ENCODE measurements at regions of chr19 and their contacts with region 1.

Region 1: DNA sequence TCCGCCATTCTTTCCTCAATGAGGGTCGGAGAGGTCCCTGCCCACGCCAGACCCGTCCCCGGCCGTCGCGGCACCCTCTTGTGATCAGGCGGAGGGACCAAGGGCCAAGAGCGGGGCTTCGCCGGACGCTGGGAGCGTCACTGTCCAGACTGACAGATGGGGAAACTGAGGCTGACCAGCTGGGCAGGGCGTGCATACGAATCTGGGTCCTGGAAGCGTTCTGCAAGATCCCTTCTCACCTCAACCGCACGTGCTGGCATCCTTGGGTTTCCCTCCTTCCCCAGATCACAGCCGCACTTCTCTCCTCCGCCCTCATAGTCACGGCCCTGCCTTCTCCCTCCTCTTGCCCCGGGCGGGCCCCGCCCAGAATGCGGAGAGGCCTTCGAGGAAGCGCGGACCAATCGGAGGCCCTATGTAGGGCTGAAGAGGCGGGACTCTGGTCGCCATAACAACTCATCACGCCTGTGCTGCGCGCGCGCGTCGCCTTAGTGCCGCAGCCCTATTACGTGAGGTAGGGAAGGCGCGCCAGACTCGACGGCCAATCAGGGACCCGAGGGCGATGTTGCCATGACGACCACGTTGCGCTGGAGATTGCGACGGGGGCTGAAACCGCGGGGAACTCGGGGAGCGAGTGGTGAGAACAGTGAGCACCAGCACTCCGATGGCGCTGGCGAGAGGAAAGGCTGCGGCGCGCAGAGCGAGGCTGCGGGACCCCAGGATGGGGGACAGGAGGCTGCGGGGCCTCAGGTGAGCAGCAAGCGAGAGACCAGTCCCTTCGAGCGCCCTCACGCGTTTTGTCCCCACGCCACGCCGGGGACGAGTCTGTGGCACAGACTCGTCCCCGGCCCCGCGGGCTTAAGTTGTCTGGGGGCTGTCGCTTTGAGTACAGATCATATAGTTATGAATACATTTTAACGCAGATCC is 5.7 kb downstream of the RNF225 start:
- DNase-seq: peak; percentile 96 to 100 (median 98)
- ATAC-seq: peak; percentile 97
- H3K4me3 ChIP-seq: peak overlapping the region; percentile 77
- H3K4me3 Mint-ChIP-seq: peak overlapping the region; percentile 86 to 98 (median 94)
- H3K27ac ChIP-seq: peak overlapping the region; percentile 91
- H3K27ac Mint-ChIP-seq: peak overlapping the region; percentile 88 to 97 (median 94)
- H3K4me1 ChIP-seq: peaks cover 6 to 13% of the 10 kb centered on the region in 2 donors
- H3K4me1 Mint-ChIP-seq: peaks cover 6 to 19% (median 8%) of the 10 kb centered on the region in 7 donors
- H3K27me3 ChIP-seq: peaks cover 0 to 3% of the 10 kb centered on the region in 2 donors
- H3K27me3 Mint-ChIP-seq: peaks cover 5 to 20% (median 7%) of the 10 kb centered on the region in 5 donors

Region 2: GRCh38 chr19:58154679-58155648 is 246.2 kb before region 1 on chr19:
- CTCF ChIA-PET with region 1: no interaction called
- POLR2A ChIA-PET with region 1: no interaction called
- intact Hi-C with region 1: no loop called
- DNase-seq: peak; percentile 92 to 100 (median 98)
- ATAC-seq: peak; percentile 98
- H3K4me3 ChIP-seq: peak overlapping the region; percentile 97
- H3K4me3 Mint-ChIP-seq: peak overlapping the region; percentile 72 to 90 (median 84)
- H3K27ac ChIP-seq: peak overlapping the region; percentile 99
- H3K27ac Mint-ChIP-seq: peak overlapping the region; percentile 52 to 80 (median 73)
- H3K4me1 ChIP-seq: peaks cover 8 to 13% of the 10 kb centered on the region in 2 donors
- H3K4me1 Mint-ChIP-seq: peaks cover 6 to 33% (median 19%) of the 10 kb centered on the region in 7 donors
- H3K27me3 ChIP-seq: no peaks in the 10 kb centered on the region
- H3K27me3 Mint-ChIP-seq: no peaks in the 10 kb centered on the region

Region 3: DNA sequence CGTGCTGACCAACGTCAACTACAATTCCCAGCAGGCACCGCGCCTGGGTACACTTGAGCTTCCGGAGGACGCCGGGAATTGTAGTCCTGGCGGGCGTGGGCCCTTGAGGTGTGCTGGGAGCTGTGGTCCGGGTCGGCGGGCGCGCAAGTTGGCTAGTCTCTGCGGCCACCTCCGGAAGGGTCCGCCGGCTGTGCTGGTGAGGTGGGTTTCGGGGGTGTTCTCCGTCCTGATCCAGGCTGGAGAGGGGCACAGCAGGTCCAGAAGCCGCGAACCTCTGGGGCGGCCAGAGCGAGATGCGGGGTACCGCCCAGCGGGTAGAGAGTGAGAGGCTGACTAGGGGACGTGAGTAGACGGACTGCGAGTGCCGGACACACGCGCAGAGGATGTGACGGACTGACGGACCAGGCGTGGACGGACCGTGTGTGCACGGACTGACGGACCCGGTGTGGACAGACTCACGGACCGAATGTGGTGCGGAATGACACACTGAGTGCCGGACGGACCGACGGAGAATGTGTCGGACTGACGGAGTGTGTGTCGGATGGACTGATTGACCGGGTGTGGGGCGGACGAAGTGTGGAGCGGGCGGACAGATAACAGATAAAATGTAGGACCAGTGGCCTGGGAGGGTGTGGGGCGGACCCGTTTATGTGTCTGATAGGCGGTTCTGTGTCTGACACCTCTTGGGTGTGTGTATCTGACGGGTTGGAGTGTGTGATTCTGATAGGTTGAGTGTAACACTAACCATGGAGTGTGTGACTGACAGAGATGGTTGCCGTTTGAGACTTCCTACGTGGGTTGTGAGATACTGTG is 74.1 kb before region 1 on chr19 and contains the start of gene ZSCAN22:
- CTCF ChIA-PET with region 1: no interaction called
- POLR2A ChIA-PET with region 1: no interaction called
- intact Hi-C with region 1: loop called in 1 of 2 experiments (anchors 1 kb)
- DNase-seq: peak; percentile 65 to 89 (median 78)
- ATAC-seq: peak; percentile 90
- H3K4me3 ChIP-seq: peak within 1 kb of the TSS; percentile 95
- H3K4me3 Mint-ChIP-seq: no peak within 1 kb of the TSS
- H3K27ac ChIP-seq: peak within 1 kb of the TSS; percentile 72
- H3K27ac Mint-ChIP-seq: no peak within 1 kb of the TSS
- H3K4me1 ChIP-seq: peaks cover 14 to 16% of the 10 kb centered on the region in 2 donors
- H3K4me1 Mint-ChIP-seq: peaks cover 0 to 10% (median 6%) of the 10 kb centered on the region in 7 donors
- H3K27me3 ChIP-seq: no peaks in the 10 kb centered on the region
- H3K27me3 Mint-ChIP-seq: no peaks in the 10 kb centered on the region
- total RNA-seq, gene ZSCAN22: 1.1 to 6.0 (median 4.5) TPM

Region 4: GRCh38 chr19:58386576-58387337 is 14.4 kb before region 1 on chr19 and contains the start of gene RPS5:
- CTCF ChIA-PET with region 1: no interaction called
- POLR2A ChIA-PET with region 1: interaction called, 16 read pairs
- intact Hi-C with region 1: loop called (anchors 1 kb)
- DNase-seq: peak; percentile 84 to 98 (median 96)
- ATAC-seq: peak; percentile 97
- H3K4me3 ChIP-seq: peak within 1 kb of the TSS; percentile 75
- H3K4me3 Mint-ChIP-seq: peak within 1 kb of the TSS; percentile 89 to 96 (median 94)
- H3K27ac ChIP-seq: peak within 1 kb of the TSS; percentile 94
- H3K27ac Mint-ChIP-seq: peak within 1 kb of the TSS; percentile 94 to 99 (median 97)
- H3K4me1 ChIP-seq: peaks cover 26% of the 10 kb centered on the region in 2 donors
- H3K4me1 Mint-ChIP-seq: peaks cover 22 to 59% (median 45%) of the 10 kb centered on the region in 7 donors
- H3K27me3 ChIP-seq: no peaks in the 10 kb centered on the region
- H3K27me3 Mint-ChIP-seq: peaks cover 0 to 3% (median 0%) of the 10 kb centered on the region in 5 donors
- total RNA-seq, gene RPS5: 911 to 1,684 (median 1,502) TPM

Region 5: DNA sequence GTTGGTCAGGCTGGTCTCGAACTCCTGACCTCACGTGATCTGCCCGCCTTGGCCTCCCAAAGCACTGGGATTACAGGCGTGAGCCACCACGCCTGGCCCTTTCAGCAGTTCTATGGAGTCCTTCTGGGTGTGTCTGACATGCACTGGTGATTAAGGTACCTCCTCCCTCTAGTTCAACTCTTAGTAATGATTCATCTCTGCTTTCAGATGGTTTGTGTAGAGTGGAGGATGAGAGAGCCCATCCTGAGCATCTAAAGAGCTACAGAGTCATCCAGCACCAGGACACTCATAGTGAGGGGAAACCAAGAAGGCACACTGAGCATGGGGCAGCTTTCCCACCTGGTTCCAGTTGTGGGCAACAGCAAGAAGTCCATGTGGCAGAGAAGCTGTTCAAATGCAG is 15.4 kb after region 1 on chr19:
- CTCF ChIA-PET with region 1: no interaction called
- POLR2A ChIA-PET with region 1: no interaction called
- intact Hi-C with region 1: no loop called
- DNase-seq: no peak
- ATAC-seq: no peak
- H3K4me3 ChIP-seq: no peak overlapping the region
- H3K4me3 Mint-ChIP-seq: no peak overlapping the region
- H3K27ac ChIP-seq: no peak overlapping the region
- H3K27ac Mint-ChIP-seq: no peak overlapping the region
- H3K4me1 ChIP-seq: no peaks in the 10 kb centered on the region
- H3K4me1 Mint-ChIP-seq: peaks cover 0 to 4% (median 0%) of the 10 kb centered on the region in 7 donors
- H3K27me3 ChIP-seq: no peaks in the 10 kb centered on the region
- H3K27me3 Mint-ChIP-seq: no peaks in the 10 kb centered on the region

Region 6: GRCh38 chr19:58475714-58476497 is 74.7 kb after region 1 on chr19 and contains the start of gene ZNF446:
- CTCF ChIA-PET with region 1: no interaction called
- POLR2A ChIA-PET with region 1: no interaction called
- intact Hi-C with region 1: loop called (anchors 1 kb)
- DNase-seq: peak; percentile 84 to 97 (median 96)
- ATAC-seq: peak; percentile 92
- H3K4me3 ChIP-seq: peak within 1 kb of the TSS; percentile 77
- H3K4me3 Mint-ChIP-seq: peak within 1 kb of the TSS; percentile 78 to 99 (median 96)
- H3K27ac ChIP-seq: peak within 1 kb of the TSS; percentile 91
- H3K27ac Mint-ChIP-seq: peak within 1 kb of the TSS; percentile 87 to 100 (median 99)
- H3K4me1 ChIP-seq: peaks cover 14 to 16% of the 10 kb centered on the region in 2 donors
- H3K4me1 Mint-ChIP-seq: peaks cover 6 to 29% (median 17%) of the 10 kb centered on the region in 7 donors
- H3K27me3 ChIP-seq: no peaks in the 10 kb centered on the region
- H3K27me3 Mint-ChIP-seq: no peaks in the 10 kb centered on the region
- total RNA-seq, gene ZNF446: 9.5 to 20.0 (median 15.1) TPM

Region 7: GRCh38 chr19:58513694-58514563 is 112.8 kb after region 1 on chr19:
- CTCF ChIA-PET with region 1: no interaction called
- POLR2A ChIA-PET with region 1: no interaction called
- intact Hi-C with region 1: loop called (anchors 1 to 5 kb)
- DNase-seq: peak; percentile 91 to 99 (median 95)
- ATAC-seq: peak; percentile 98
- H3K4me3 ChIP-seq: peak overlapping the region; percentile 39
- H3K4me3 Mint-ChIP-seq: peak overlapping the region; percentile 73 to 93 (median 84)
- H3K27ac ChIP-seq: peak overlapping the region; percentile 65
- H3K27ac Mint-ChIP-seq: peak overlapping the region; percentile 67 to 94 (median 85)
- H3K4me1 ChIP-seq: peaks cover 17 to 21% of the 10 kb centered on the region in 2 donors
- H3K4me1 Mint-ChIP-seq: peaks cover 17 to 40% (median 27%) of the 10 kb centered on the region in 7 donors
- H3K27me3 ChIP-seq: no peaks in the 10 kb centered on the region
- H3K27me3 Mint-ChIP-seq: no peaks in the 10 kb centered on the region

Region 8: GRCh38 chr19:58572818-58573657 is 171.9 kb after region 1 on chr19 and contains the start of gene MZF1:
- CTCF ChIA-PET with region 1: no interaction called
- POLR2A ChIA-PET with region 1: no interaction called
- intact Hi-C with region 1: loop called in 1 of 2 experiments (anchors 1 kb)
- DNase-seq: peak; percentile 97 to 100 (median 100)
- ATAC-seq: peak; percentile 81
- H3K4me3 ChIP-seq: peak within 1 kb of the TSS; percentile 71
- H3K4me3 Mint-ChIP-seq: peak within 1 kb of the TSS; percentile 82 to 100 (median 98)
- H3K27ac ChIP-seq: peak within 1 kb of the TSS; percentile 97
- H3K27ac Mint-ChIP-seq: peak within 1 kb of the TSS; percentile 97 to 100 (median 100)
- H3K4me1 ChIP-seq: peaks cover 19 to 20% of the 10 kb centered on the region in 2 donors
- H3K4me1 Mint-ChIP-seq: peaks cover 27 to 50% (median 33%) of the 10 kb centered on the region in 7 donors
- H3K27me3 ChIP-seq: no peaks in the 10 kb centered on the region
- H3K27me3 Mint-ChIP-seq: peaks cover 0 to 4% (median 0%) of the 10 kb centered on the region in 5 donors
- total RNA-seq, gene MZF1: 35.0 to 51.8 (median 44.9) TPM

Measured in naive thymus-derived CD4-positive, alpha-beta T cell (primary cell).